ENCODE measurements at regions of chr9 and their contacts with region 1.

Region 1: GRCh38 chr9:106862825-106863720 is at the start of gene ZNF462:
- DNase-seq: peak; percentile 81
- H3K4me3 ChIP-seq: peak within 1 kb of the TSS; percentile 70
- H3K27ac ChIP-seq: peak within 1 kb of the TSS; percentile 75
- H3K4me1 ChIP-seq: no peaks in the 10 kb centered on the region
- H3K27me3 ChIP-seq: peaks cover 4% of the 10 kb centered on the region
- CTCF ChIP-seq: no peak
- total RNA-seq, gene ZNF462: 28.9 to 29.3 TPM

Region 2: DNA sequence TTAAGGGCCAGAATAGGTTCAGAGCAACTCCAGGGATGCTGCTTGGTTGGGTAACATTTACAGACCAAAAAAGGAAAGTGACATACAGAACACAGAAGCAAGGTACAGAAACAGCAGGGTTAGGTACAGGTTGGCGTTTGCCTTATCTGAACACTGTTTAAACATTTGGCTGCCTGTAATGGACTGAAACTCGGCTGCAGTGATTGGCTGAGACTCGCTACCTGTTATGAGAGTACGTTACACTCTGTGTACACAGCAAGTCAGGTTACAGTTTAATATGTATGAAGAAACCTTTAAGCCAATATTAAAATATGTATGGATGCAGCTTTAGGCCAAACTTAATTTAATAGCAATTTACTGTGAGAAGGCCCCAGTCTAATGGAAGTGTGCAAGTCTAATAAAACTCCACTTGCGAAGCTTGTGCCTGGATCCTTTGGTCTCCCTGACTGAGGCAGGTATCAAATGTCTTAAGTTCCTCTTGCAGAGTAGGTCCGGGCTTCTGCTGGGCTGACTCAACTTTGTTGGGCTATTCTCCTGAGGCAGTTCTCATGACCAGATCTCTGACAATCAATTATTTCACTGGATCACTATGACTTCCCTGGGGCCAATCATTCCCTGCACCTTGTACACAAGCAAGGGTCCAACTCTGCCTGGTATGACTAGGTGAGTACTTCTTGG is 204.8 kb after region 1 on chr9:
- intact Hi-C with region 1: loop called (anchors 10 kb)
- DNase-seq: peak; percentile 80
- H3K4me3 ChIP-seq: no peak overlapping the region
- H3K27ac ChIP-seq: peak overlapping the region; percentile 87
- H3K4me1 ChIP-seq: no peaks in the 10 kb centered on the region
- H3K27me3 ChIP-seq: no peaks in the 10 kb centered on the region
- CTCF ChIP-seq: no peak